Common myeloid progenitor, CD34-positive (primary cell): ENCODE measurements at regions of chr7 and their contacts with region 1.

Region 1: GRCh38 chr7:151226875-151227782 is at the start of gene ABCF2:
- DNase-seq: peak; percentile 98 to 99 (median 98)
- H3K4me3 ChIP-seq: peak within 1 kb of the TSS; percentile 59 to 98 (median 91)
- H3K27ac ChIP-seq: peak within 1 kb of the TSS; percentile 42 to 79
- H3K4me1 ChIP-seq: peaks cover 15 to 31% (median 21%) of the 10 kb centered on the region in 4 experiments
- H3K27me3 ChIP-seq: no peaks in the 10 kb centered on the region

Region 2: DNA sequence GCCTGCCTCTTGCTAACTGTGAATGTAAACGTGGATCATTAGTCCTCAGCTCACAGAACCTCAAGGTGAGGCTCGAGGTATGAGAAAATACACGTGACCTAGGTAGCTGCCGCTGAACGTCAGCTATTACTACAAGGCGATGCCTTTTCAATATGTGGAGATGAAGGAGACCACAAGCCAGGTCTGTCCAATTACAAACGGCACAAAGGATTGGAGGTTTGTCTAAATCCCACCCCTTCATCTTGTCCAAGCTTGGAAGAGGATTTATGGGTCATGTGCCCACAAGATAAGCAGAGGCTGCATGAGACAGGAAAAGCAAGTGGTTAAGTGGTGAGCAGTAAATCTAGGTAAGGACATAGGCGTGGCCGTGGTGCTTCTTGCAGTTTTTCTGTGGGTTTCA is 20.2 kb before region 1 on chr7:
- CTCF ChIA-PET with region 1: interaction called, 39 read pairs
- POLR2A ChIA-PET with region 1: interaction called, 6 read pairs
- DNase-seq: peak; percentile 88 to 98 (median 95)
- H3K4me3 ChIP-seq: peak overlapping the region in 1 of 7 experiments; percentile 65
- H3K27ac ChIP-seq: no peak overlapping the region
- H3K4me1 ChIP-seq: peaks cover 8 to 35% (median 27%) of the 10 kb centered on the region in 4 experiments
- H3K27me3 ChIP-seq: peaks cover 0 to 25% (median 4%) of the 10 kb centered on the region in 5 experiments